T-cell (primary cell): ENCODE measurements at regions of chr4 and their contacts with region 1.

Region 1: GRCh38 chr4:75995727-75996126 is 5.0 kb upstream of the SDAD1 start:
- DNase-seq: peak in 6 of 35 experiments; percentile 1 to 71 (median 6)
- ATAC-seq: no peak
- H3K4me3 ChIP-seq: no peak overlapping the region
- H3K4me3 Mint-ChIP-seq: no peak overlapping the region
- H3K27ac ChIP-seq: no peak overlapping the region
- H3K27ac Mint-ChIP-seq: no peak overlapping the region
- H3K4me1 ChIP-seq: peaks cover 0 to 6% of the 10 kb centered on the region in 2 experiments
- H3K4me1 Mint-ChIP-seq: peaks cover 7 to 8% (median 7%) of the 10 kb centered on the region in 3 donors
- H3K27me3 ChIP-seq: peaks cover 2% of the 10 kb centered on the region in 2 experiments
- H3K27me3 Mint-ChIP-seq: peaks cover 0 to 2% of the 10 kb centered on the region in 2 donors

Region 2: GRCh38 chr4:76061982-76062381 is 66.3 kb after region 1 on chr4:
- CTCF ChIA-PET with region 1: interaction called, 21 to 25 read pairs
- POLR2A ChIA-PET with region 1: no interaction called
- DNase-seq: no peak
- ATAC-seq: no peak
- H3K4me3 ChIP-seq: no peak overlapping the region
- H3K4me3 Mint-ChIP-seq: no peak overlapping the region
- H3K27ac ChIP-seq: no peak overlapping the region
- H3K27ac Mint-ChIP-seq: no peak overlapping the region
- H3K4me1 ChIP-seq: no peaks in the 10 kb centered on the region
- H3K4me1 Mint-ChIP-seq: peaks cover 0 to 5% (median 0%) of the 10 kb centered on the region in 3 donors
- H3K27me3 ChIP-seq: no peaks in the 10 kb centered on the region
- H3K27me3 Mint-ChIP-seq: peaks cover 0 to 8% of the 10 kb centered on the region in 2 donors

Region 3: GRCh38 chr4:76067652-76068286 is 72.0 kb after region 1 on chr4:
- CTCF ChIA-PET with region 1: interaction called, 21 to 25 read pairs
- POLR2A ChIA-PET with region 1: no interaction called
- DNase-seq: peak; percentile 14 to 81 (median 53)
- ATAC-seq: peak; percentile 69 to 79 (median 69)
- H3K4me3 ChIP-seq: no peak overlapping the region
- H3K4me3 Mint-ChIP-seq: no peak overlapping the region
- H3K27ac ChIP-seq: no peak overlapping the region
- H3K27ac Mint-ChIP-seq: no peak overlapping the region
- H3K4me1 ChIP-seq: no peaks in the 10 kb centered on the region
- H3K4me1 Mint-ChIP-seq: no peaks in the 10 kb centered on the region
- H3K27me3 ChIP-seq: no peaks in the 10 kb centered on the region
- H3K27me3 Mint-ChIP-seq: peaks cover 0 to 4% of the 10 kb centered on the region in 2 donors